ENCODE measurements at regions of chr12 and their contacts with region 1.

Region 1: GRCh38 chr12:64551698-64552097 is 58.6 kb upstream of the RASSF3 start:
- DNase-seq: no peak
- H3K4me3 ChIP-seq: no peak overlapping the region
- H3K27ac ChIP-seq: no peak overlapping the region
- H3K27me3 ChIP-seq: no peaks in the 10 kb centered on the region
- CTCF ChIP-seq: no peak

Region 2: GRCh38 chr12:64571411-64571810 is 19.7 kb after region 1 on chr12:
- CTCF ChIA-PET with region 1: interaction called, 29 read pairs
- POLR2A ChIA-PET with region 1: no interaction called
- DNase-seq: no peak
- H3K4me3 ChIP-seq: no peak overlapping the region
- H3K27ac ChIP-seq: no peak overlapping the region
- H3K27me3 ChIP-seq: peaks cover 3% of the 10 kb centered on the region
- CTCF ChIP-seq: no peak

Region 3: DNA sequence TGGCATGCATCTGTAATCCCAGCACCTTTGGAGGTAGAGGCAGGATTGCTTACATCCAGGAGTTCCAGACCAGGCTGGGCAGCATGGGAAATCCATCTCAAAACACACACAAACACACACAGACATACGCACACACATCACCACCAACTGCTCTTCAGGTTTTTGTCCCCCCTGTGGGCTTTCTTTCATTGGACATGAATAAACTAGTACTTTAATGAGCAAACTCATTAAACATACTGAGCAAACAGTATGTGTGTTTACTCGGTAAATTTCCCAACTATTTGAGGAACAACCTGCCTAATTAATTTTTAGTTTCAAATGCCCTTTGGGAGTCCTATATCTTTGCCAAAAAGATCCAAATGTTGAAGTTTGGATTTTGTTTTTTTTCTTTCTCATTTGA is 48.5 kb after region 1 on chr12:
- CTCF ChIA-PET with region 1: interaction called, 17 read pairs
- POLR2A ChIA-PET with region 1: no interaction called
- DNase-seq: no peak
- H3K4me3 ChIP-seq: no peak overlapping the region
- H3K27ac ChIP-seq: no peak overlapping the region
- H3K27me3 ChIP-seq: no peaks in the 10 kb centered on the region
- CTCF ChIP-seq: no peak

Region 4: DNA sequence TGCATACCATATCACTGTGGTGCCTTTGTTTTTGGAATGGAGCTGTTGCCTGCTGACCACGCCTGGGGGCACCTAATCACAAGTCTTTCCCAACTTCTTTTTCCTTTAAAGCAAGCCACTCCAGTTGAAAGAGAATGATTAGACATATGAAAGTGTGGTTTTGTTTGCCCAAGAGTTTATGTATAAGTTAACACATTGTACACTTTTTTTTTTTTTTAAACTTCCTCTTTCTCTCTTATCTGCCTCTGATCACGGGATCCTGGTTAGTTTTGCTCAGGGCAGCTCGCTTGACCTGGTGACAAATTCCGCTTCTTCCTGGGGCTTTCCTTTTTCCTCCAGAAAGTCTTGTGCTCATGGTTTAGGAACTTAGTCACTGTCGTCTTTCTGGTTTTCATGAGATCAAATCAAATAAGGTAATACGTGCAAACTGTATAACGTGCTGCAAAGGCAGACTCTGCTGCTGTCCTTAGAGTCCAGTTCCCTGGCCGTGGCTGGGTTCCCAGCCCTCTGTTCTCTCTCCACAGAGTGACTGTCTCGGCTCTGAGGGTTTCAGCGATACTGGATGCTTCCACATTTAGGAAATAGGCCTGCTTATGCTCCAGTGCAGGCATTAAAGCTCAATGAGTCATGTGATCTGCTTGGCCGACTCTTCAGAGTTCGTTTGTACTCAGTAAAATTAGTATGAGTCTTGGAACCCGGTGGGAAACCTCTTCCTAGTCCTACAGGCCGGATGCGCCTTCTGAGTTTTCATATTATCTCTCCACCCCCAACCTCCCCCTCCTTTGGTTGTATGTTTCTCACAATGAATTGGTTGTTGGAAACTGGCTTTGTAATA is 73.8 kb after region 1 on chr12:
- CTCF ChIA-PET with region 1: interaction called, 10 read pairs
- POLR2A ChIA-PET with region 1: no interaction called
- DNase-seq: peak; percentile 76
- H3K4me3 ChIP-seq: peak overlapping the region; percentile 50
- H3K27ac ChIP-seq: peak overlapping the region; percentile 97
- H3K27me3 ChIP-seq: no peaks in the 10 kb centered on the region
- CTCF ChIP-seq: no peak

Region 5: DNA sequence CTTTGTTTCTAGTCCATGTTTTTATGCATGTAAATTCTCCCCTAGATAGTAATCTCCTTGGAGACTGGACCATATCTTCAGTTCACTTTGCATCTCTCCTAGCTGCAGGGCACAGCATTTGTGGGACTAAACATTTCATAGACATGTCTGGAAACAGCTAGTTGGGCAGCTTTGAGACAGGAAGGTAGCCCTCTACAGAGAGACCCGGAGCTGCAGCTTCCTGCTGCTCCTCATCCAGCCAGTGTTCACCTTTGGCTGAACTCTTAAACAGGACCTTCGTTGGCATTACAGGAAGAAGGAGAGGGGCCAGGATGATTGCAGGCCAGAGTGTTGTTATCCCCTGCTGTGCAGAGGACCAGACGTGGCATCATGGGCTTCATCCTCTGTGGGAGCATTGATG is 154.6 kb after region 1 on chr12:
- CTCF ChIA-PET with region 1: interaction called, 35 read pairs
- POLR2A ChIA-PET with region 1: no interaction called
- DNase-seq: no peak
- H3K4me3 ChIP-seq: no peak overlapping the region
- H3K27ac ChIP-seq: no peak overlapping the region
- H3K27me3 ChIP-seq: no peaks in the 10 kb centered on the region
- CTCF ChIP-seq: no peak

Region 6: DNA sequence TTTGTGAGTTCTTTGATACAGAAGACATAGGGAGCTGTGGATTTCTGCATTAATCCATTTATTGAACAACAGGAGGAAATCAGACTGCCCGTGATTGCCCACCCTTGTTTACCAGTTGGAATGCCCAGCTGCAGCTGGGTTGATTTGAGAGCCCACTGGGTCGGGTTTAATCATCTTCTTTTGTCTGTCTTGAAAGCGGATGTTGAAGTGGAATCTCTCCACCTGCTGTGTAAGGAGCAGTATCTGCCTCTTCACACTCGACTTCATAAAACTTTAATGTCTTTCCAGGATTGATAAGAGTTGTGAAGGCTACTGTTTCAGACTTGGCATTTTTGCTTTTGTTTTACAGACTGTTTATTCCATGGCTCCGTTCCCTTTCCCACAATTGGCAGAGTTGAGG is 312.6 kb after region 1 on chr12:
- CTCF ChIA-PET with region 1: no interaction called
- POLR2A ChIA-PET with region 1: no interaction called
- DNase-seq: no peak
- H3K4me3 ChIP-seq: no peak overlapping the region
- H3K27ac ChIP-seq: no peak overlapping the region
- H3K27me3 ChIP-seq: peaks cover 16% of the 10 kb centered on the region
- CTCF ChIP-seq: no peak

Region 7: DNA sequence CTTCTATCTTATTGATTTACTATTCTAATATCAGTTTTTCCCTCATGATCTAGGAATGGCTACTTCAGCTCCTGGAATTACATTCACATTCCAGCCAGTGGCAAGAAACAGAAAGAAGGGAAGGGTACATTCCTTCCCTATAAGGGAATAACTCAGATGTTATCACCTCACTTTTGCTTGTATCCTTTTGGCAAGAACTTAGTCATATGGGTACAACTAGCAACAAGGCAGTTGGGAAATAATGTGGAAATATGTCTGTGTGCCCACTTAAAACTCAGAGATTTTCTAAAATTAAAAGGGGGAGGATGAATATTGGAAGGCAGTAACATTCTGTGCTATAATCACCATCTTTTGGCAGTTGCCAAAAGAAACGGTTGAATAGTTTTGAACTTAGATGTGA is 812.3 kb after region 1 on chr12:
- CTCF ChIA-PET with region 1: no interaction called
- POLR2A ChIA-PET with region 1: no interaction called
- DNase-seq: no peak
- H3K4me3 ChIP-seq: no peak overlapping the region
- H3K27ac ChIP-seq: no peak overlapping the region
- H3K27me3 ChIP-seq: no peaks in the 10 kb centered on the region
- CTCF ChIP-seq: no peak